Activated CD4-positive, alpha-beta T cell treated with anti-CD3 and anti-CD28 coated beads, Interleukin-2, amount 10 ng/mL, durations not matched to agents 7 days and 5 days (primary cell): ENCODE measurements at regions of chr11 and their contacts with region 1.

Region 1: DNA sequence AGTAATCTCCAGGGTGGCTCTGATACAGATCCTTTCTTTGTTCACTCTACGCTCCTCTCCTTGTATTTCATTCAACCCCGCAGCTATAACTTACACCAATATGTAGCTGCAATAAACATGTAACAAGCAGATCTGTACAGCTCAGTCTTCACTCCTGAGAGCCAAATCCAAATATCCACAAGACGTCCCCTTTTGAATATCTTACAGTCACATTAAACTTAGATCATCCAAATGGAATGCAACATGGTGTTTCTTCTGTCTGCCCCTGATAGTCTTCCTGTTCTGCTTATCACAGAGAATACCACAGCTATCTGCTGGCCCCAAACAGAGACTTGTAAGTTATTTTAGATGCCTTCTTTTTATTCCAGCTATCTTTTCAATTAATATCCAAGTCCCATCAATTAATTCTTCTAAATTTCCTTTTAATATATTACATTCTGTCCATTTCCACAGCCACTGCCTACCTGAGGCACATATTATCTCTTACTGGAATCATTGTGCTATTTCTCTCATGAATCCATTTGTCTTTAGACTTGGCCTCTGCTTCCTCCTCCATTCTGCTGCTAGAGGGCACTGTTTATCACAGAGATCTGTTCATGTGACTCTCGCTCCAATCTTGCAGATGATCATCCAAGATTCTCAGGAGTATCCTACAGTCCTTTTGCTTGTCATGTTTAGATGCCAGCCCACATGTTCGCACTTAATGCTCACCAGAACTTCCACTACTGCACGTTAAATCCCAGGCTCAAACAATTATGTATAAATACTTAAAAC is 908.6 kb downstream of the NTM start:
- DNase-seq: no peak
- H3K4me3 Mint-ChIP-seq: no peak overlapping the region
- H3K27ac Mint-ChIP-seq: no peak overlapping the region
- H3K4me1 Mint-ChIP-seq: no peaks in the 10 kb centered on the region
- H3K27me3 Mint-ChIP-seq: no peaks in the 10 kb centered on the region

Region 2: GRCh38 chr11:132186699-132187098 is 92.3 kb before region 1 on chr11:
- CTCF ChIA-PET with region 1: no interaction called
- POLR2A ChIA-PET with region 1: no interaction called
- DNase-seq: no peak
- H3K4me3 Mint-ChIP-seq: no peak overlapping the region
- H3K27ac Mint-ChIP-seq: no peak overlapping the region
- H3K4me1 Mint-ChIP-seq: no peaks in the 10 kb centered on the region
- H3K27me3 Mint-ChIP-seq: no peaks in the 10 kb centered on the region

Region 3: GRCh38 chr11:132289590-132290256 is 10.7 kb after region 1 on chr11:
- CTCF ChIA-PET with region 1: no interaction called
- POLR2A ChIA-PET with region 1: interaction called, 11 read pairs
- DNase-seq: no peak
- H3K4me3 Mint-ChIP-seq: no peak overlapping the region
- H3K27ac Mint-ChIP-seq: no peak overlapping the region
- H3K4me1 Mint-ChIP-seq: no peaks in the 10 kb centered on the region
- H3K27me3 Mint-ChIP-seq: no peaks in the 10 kb centered on the region